ENCODE measurements at regions of chr18 and their contacts with region 1.

Region 1: GRCh38 chr18:74196220-74197119 is 48.1 kb downstream of the TIMM21 start:
- DNase-seq: peak; percentile 85
- CTCF ChIP-seq: peak; percentile 70

Region 2: GRCh38 chr18:74342416-74343043 is 146.1 kb after region 1 on chr18:
- in situ Hi-C with region 1: loop called (anchors 10 kb)
- DNase-seq: peak; percentile 35
- CTCF ChIP-seq: no peak

Region 3: DNA sequence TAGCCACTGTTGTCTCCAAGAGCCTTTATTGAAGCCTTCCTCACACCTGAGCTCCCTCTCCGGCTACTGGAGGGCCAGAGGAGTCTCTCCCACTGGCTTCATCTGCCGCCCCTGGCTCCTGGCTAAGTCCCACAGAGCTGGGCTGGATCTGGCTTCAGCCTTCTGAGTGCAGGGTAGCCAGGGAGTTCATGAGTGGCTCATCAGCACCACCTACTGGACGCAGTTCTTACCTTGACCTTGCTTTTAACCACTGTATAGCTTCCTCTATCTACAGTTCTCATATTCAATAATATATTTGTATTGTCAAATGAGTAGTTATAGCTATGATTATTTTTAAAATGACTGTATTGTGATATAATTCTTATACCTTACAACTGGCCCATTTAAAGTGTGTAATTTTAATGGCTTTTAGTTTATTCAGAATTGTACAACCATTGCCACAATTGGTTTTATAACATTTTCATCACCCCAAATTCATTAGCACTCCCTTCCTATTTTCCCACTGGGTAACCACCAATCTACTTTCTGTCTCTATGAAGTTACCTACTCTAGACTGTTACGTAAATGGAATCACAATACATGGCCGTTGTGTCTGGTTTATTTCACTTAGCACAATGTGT is 355.6 kb after region 1 on chr18:
- in situ Hi-C with region 1: loop called (anchors 10 kb)
- DNase-seq: peak; percentile 82
- CTCF ChIP-seq: peak; percentile 79